Activated CD4-positive, alpha-beta memory T cell treated with anti-CD3 and anti-CD28 coated beads for 36 hours (primary cell): ENCODE measurements at regions of chr12 and their contacts with region 1.

Region 1: DNA sequence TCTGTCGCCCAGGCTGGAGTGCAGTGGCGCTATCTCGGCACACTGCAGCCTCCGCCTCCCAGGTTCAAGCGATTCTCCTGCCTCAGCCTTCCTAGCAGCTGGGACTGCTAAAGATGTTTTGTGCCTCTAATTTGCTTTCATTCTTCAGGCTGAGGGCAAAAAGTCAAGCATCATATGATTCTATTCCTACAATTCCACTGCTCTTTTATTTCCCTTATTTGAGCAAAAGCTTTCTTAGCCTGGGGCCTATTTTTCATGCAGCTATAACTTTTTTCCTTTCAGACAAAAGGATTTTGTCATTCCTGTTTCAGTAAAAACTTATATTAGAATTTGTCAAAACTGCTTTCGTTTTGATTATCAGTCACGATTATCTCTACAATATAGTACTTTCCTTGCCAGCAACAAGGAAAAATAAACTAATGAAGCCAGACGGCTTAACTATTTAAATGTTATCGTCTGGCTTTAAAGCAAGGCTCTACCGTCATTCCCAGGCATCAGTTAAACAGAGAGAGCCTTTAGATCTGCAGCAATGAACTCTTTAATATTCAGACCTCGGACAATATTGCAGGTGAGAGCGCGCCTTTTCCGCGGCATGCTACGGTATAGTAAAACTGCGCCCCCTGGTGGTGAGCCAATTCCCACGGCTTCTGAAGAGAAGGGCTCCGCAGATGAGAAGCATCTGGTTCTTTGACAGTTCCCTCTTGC is 1.4 kb upstream of the SLC2A13 start:
- DNase-seq: peak; percentile 91
- H3K4me3 Mint-ChIP-seq: peak overlapping the region; percentile 65
- H3K27ac Mint-ChIP-seq: peak overlapping the region; percentile 13
- H3K4me1 Mint-ChIP-seq: peaks cover 53% of the 10 kb centered on the region
- H3K27me3 Mint-ChIP-seq: peaks cover 10% of the 10 kb centered on the region

Region 2: GRCh38 chr12:38906482-38907170 is 1200.6 kb before region 1 on chr12:
- CTCF ChIA-PET with region 1: no interaction called
- POLR2A ChIA-PET with region 1: no interaction called
- intact Hi-C with region 1: loop called (anchors 10 kb)
- DNase-seq: peak; percentile 80
- H3K4me3 Mint-ChIP-seq: peak overlapping the region; percentile 82
- H3K27ac Mint-ChIP-seq: peak overlapping the region; percentile 89
- H3K4me1 Mint-ChIP-seq: peaks cover 18% of the 10 kb centered on the region
- H3K27me3 Mint-ChIP-seq: peaks cover 20% of the 10 kb centered on the region

Region 3: GRCh38 chr12:39372929-39373328 is 734.3 kb before region 1 on chr12:
- CTCF ChIA-PET with region 1: no interaction called
- POLR2A ChIA-PET with region 1: no interaction called
- intact Hi-C with region 1: loop called (anchors 5 kb)
- DNase-seq: peak; percentile 16
- H3K4me3 Mint-ChIP-seq: no peak overlapping the region
- H3K27ac Mint-ChIP-seq: peak overlapping the region; percentile 52
- H3K4me1 Mint-ChIP-seq: peaks cover 16% of the 10 kb centered on the region
- H3K27me3 Mint-ChIP-seq: no peaks in the 10 kb centered on the region

Region 4: GRCh38 chr12:39682689-39683477 is 424.4 kb before region 1 on chr12:
- CTCF ChIA-PET with region 1: no interaction called
- POLR2A ChIA-PET with region 1: no interaction called
- intact Hi-C with region 1: loop called (anchors 5 kb)
- DNase-seq: no peak
- H3K4me3 Mint-ChIP-seq: peak overlapping the region; percentile 76
- H3K27ac Mint-ChIP-seq: peak overlapping the region; percentile 82
- H3K4me1 Mint-ChIP-seq: peaks cover 33% of the 10 kb centered on the region
- H3K27me3 Mint-ChIP-seq: no peaks in the 10 kb centered on the region

Region 5: DNA sequence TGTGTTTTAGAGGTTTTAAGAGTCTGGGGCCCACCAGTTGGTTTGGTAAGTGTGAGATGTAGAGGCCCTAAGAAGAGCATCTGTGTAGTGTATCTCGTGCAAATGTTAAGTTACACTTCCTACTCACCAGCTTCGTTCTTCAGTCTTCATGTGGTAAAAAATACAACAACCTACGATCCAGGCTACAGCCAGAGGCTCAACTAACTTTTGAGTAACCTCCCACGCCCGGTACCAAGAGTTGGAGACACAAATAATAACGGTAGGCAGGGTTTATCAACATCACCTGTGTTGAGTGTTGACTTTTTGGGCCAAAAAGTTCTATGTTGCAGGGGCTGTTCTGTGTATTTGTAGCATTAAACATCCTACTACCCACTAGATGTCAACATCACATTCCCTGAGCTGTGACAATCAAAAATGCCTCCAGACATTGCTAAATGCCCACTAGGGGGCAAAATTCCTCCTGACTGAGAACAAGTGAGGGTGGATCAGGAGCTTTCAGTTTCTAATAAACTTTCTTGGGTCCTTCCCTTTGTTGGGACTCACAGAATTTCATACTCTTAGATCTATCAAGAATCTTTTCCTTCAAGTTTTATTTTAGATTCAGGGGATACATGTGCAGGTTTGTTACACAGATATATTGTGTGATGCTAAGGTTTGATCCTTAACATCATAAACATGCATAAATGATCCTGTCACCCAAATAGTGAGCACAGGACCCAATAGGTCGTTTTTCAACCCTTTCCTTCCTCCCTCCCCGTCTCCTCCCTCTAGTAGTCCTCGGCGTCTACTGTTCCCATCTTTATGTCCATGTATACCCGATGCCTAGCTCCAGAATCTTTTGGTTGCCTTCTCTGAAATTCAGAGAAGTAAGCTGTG is 96.1 kb before region 1 on chr12:
- CTCF ChIA-PET with region 1: interaction called, 93 read pairs
- POLR2A ChIA-PET with region 1: no interaction called
- intact Hi-C with region 1: loop called (anchors 1 kb)
- DNase-seq: peak; percentile 40
- H3K4me3 Mint-ChIP-seq: no peak overlapping the region
- H3K27ac Mint-ChIP-seq: no peak overlapping the region
- H3K4me1 Mint-ChIP-seq: peaks cover 20% of the 10 kb centered on the region
- H3K27me3 Mint-ChIP-seq: no peaks in the 10 kb centered on the region

Region 6: DNA sequence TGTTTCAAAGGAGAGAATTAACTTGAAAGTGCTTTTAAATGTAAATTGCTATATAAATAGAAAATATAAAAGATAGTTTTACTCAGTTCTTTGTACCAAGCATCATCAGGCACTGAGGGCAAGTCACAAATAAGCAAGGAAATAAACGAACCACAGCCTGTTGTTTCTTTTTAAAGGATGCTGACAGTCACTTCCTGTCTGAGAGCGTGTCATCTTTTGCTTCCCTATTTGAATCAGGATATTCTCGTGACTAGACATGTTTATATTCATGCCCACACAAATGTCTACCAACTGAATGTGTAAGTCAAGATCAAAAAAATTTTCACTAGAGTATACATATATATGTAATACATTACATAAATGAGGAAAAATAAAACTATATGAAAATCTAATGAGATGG is 30.0 kb after region 1 on chr12:
- CTCF ChIA-PET with region 1: no interaction called
- POLR2A ChIA-PET with region 1: no interaction called
- intact Hi-C with region 1: loop called (anchors 1 kb)
- DNase-seq: no peak
- H3K4me3 Mint-ChIP-seq: no peak overlapping the region
- H3K27ac Mint-ChIP-seq: no peak overlapping the region
- H3K4me1 Mint-ChIP-seq: peaks cover 15% of the 10 kb centered on the region
- H3K27me3 Mint-ChIP-seq: peaks cover 4% of the 10 kb centered on the region

Region 7: GRCh38 chr12:40261937-40262336 is 154.7 kb after region 1 on chr12:
- CTCF ChIA-PET with region 1: no interaction called
- POLR2A ChIA-PET with region 1: no interaction called
- intact Hi-C with region 1: no loop called
- DNase-seq: no peak
- H3K4me3 Mint-ChIP-seq: no peak overlapping the region
- H3K27ac Mint-ChIP-seq: no peak overlapping the region
- H3K4me1 Mint-ChIP-seq: no peaks in the 10 kb centered on the region
- H3K27me3 Mint-ChIP-seq: no peaks in the 10 kb centered on the region